Tibial artery (tissue), 4 donors: ENCODE measurements at regions of chr17 and their contacts with region 1.

Region 1: GRCh38 chr17:40615295-40615988 is 32.2 kb downstream of the SMARCE1 start:
- DNase-seq: no peak
- H3K4me3 ChIP-seq: no peak overlapping the region
- H3K27ac ChIP-seq: no peak overlapping the region
- H3K4me1 ChIP-seq: peaks cover 0 to 7% (median 2%) of the 10 kb centered on the region in 4 donors
- H3K27me3 ChIP-seq: peaks cover 0 to 55% of the 10 kb centered on the region in 2 donors
- CTCF ChIP-seq: no peak

Region 2: GRCh38 chr17:40371261-40371929 is 244.0 kb before region 1 on chr17:
- intact Hi-C with region 1: no loop called
- DNase-seq: no peak
- H3K4me3 ChIP-seq: no peak overlapping the region
- H3K27ac ChIP-seq: no peak overlapping the region
- H3K4me1 ChIP-seq: no peaks in the 10 kb centered on the region
- H3K27me3 ChIP-seq: peaks cover 0 to 4% of the 10 kb centered on the region in 2 donors
- CTCF ChIP-seq: no peak

Region 3: DNA sequence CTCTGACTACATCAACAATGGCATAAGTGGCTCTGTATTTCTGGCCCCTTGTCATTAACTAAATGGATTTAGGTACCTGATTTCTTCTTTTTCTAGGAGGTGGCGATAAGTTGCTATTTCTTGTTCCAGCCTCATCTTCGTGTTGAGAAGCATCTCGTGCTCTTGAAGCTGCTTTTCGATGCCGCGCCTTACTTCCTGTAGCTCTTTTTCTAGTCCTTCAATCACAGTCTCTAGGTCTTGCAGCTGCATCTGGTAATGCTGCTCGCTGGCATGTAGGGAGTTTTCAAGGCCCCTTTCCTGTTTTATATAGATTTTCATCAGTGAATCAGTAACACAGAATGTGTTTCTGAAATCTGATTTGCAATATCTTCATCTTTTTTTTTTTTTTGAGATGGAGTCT is 44.5 kb after region 1 on chr17:
- intact Hi-C with region 1: no loop called
- DNase-seq: no peak
- H3K4me3 ChIP-seq: no peak overlapping the region
- H3K27ac ChIP-seq: no peak overlapping the region
- H3K4me1 ChIP-seq: no peaks in the 10 kb centered on the region
- H3K27me3 ChIP-seq: peaks cover 0 to 9% of the 10 kb centered on the region in 2 donors
- CTCF ChIP-seq: no peak

Region 4: GRCh38 chr17:40791787-40792436 is 176.5 kb after region 1 on chr17:
- intact Hi-C with region 1: loop called (anchors 10 kb)
- DNase-seq: no peak
- H3K4me3 ChIP-seq: no peak overlapping the region
- H3K27ac ChIP-seq: no peak overlapping the region
- H3K4me1 ChIP-seq: peaks cover 0 to 9% (median 1%) of the 10 kb centered on the region in 4 donors
- H3K27me3 ChIP-seq: peaks cover 0 to 20% of the 10 kb centered on the region in 2 donors
- CTCF ChIP-seq: peak; percentile 43 to 48